ENCODE measurements at regions of chr3 and their contacts with region 1.

Region 1: GRCh38 chr3:183794452-183794851 is 30.9 kb downstream of the MAP6D1 start:
- DNase-seq: no peak
- H3K4me3 ChIP-seq: no peak overlapping the region
- H3K27ac ChIP-seq: no peak overlapping the region
- H3K4me1 ChIP-seq: no peaks in the 10 kb centered on the region
- H3K27me3 ChIP-seq: no peaks in the 10 kb centered on the region
- CTCF ChIP-seq: no peak
- POLR2A ChIP-seq: no peak

Region 2: GRCh38 chr3:182979674-182980191 is 814.7 kb before region 1 on chr3:
- intact Hi-C with region 1: loop called (anchors 5 kb)
- DNase-seq: no peak
- H3K4me3 ChIP-seq: peak overlapping the region; percentile 81 to 97 (median 95)
- H3K27ac ChIP-seq: peak overlapping the region; percentile 89 to 96
- H3K4me1 ChIP-seq: peaks cover 2 to 3% of the 10 kb centered on the region in 2 donors
- H3K27me3 ChIP-seq: no peaks in the 10 kb centered on the region
- CTCF ChIP-seq: no peak
- POLR2A ChIP-seq: no peak

Region 3: GRCh38 chr3:183966251-183966801 is 171.9 kb after region 1 on chr3:
- intact Hi-C with region 1: no loop called
- DNase-seq: peak in 1 of 2 donors; percentile 19
- H3K4me3 ChIP-seq: no peak overlapping the region
- H3K27ac ChIP-seq: no peak overlapping the region
- H3K4me1 ChIP-seq: no peaks in the 10 kb centered on the region
- H3K27me3 ChIP-seq: no peaks in the 10 kb centered on the region
- CTCF ChIP-seq: no peak
- POLR2A ChIP-seq: no peak

Region 4: GRCh38 chr3:184491867-184492615 is 697.6 kb after region 1 on chr3:
- intact Hi-C with region 1: loop called (anchors 5 kb)
- DNase-seq: no peak
- H3K4me3 ChIP-seq: peak overlapping the region; percentile 14 to 46 (median 28)
- H3K27ac ChIP-seq: no peak overlapping the region
- H3K4me1 ChIP-seq: no peaks in the 10 kb centered on the region
- H3K27me3 ChIP-seq: peaks cover 0 to 28% of the 10 kb centered on the region in 2 donors
- CTCF ChIP-seq: no peak
- POLR2A ChIP-seq: no peak